ENCODE measurements at regions of chr12 and their contacts with region 1.

Region 1: DNA sequence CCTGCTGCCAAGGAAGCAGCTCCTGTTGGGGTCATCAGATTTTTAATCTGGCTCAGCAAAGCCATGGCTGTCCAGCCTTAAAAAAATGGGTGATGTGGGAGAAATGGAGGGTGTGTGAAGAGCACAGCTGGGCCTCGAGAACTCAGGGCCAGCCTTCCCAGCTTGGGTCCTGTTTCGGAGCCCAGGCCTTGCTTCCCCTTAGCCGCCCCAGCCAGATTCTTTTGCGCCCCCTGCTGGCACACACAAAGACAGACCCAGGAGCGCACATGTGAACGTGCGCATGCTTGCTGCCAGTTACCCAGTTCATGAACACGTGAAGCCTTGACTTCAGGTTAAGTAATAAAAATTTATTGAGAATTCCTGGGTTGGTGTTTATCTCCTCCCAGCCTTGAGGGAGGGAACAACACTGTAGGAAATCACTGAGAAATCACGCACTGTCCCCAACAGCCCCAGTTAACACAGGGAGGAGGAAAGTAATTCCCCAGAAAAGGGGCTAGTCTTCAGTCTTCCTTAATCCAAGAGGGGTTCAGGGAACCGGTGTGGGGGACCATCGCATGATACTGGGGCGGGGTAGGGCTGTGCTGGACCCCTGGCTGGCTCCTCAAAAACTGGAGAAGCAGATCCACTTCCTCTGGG is 5.3 kb downstream of the PHB2 start:
- DNase-seq: peak; percentile 95
- ATAC-seq: peak; percentile 48
- H3K4me3 Mint-ChIP-seq: no peak overlapping the region
- H3K27ac Mint-ChIP-seq: peak overlapping the region; percentile 94
- H3K4me1 Mint-ChIP-seq: peaks cover 76% of the 10 kb centered on the region
- H3K27me3 Mint-ChIP-seq: no peaks in the 10 kb centered on the region

Region 2: DNA sequence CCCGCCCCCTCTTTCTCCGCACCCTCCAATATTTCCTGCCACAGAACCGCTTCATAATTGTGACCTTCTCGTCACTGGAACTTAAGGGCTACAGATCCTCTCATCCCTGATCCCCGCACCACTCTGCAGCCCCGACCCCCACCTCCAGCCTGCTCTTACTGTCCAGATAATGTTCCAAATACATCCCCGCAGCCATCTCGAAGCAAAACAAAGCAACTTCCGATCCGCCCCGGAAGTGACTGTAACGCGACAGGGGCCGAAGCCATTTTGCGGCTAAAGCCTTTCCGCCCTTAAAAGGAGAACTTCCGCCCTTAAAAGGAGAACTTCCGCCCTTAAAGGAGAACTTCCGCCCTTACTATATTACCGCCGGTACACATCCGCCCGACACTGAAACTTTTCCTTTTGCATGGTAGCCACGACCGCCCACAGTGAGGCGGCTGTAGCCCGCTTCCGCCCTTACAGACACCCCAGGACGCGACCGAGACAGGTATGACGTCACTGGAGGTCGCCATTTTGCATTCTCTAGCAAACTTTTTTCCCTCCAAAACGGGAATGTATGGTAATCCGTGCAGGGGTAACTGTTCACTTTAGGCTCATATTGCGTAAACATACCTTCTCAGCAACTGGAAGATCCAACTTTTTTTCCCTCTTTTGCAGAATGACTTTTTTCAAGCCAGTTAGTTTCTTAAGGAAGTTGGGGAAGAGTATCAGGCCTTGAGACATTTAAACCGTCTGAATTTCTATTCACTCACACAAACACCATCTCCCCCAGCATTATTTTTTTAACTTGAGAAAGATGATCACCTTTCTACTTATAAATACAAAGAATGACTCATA is 302.0 kb before region 1 on chr12 and contains the start of gene ING4:
- CTCF ChIA-PET with region 1: interaction called, 3 read pairs
- POLR2A ChIA-PET with region 1: no interaction called
- intact Hi-C with region 1: loop called in 1 of 2 experiments (anchors 1 kb)
- DNase-seq: peak; percentile 98
- ATAC-seq: peak; percentile 98
- H3K4me3 Mint-ChIP-seq: peak within 1 kb of the TSS; percentile 84
- H3K27ac Mint-ChIP-seq: peak within 1 kb of the TSS; percentile 91
- H3K4me1 Mint-ChIP-seq: peaks cover 24% of the 10 kb centered on the region
- H3K27me3 Mint-ChIP-seq: no peaks in the 10 kb centered on the region
- total RNA-seq, gene ING4: 14.9 to 17.6 TPM

Region 3: GRCh38 chr12:6851921-6852650 is 113.1 kb before region 1 on chr12 and contains the start of gene USP5:
- CTCF ChIA-PET with region 1: interaction called, 3 read pairs
- POLR2A ChIA-PET with region 1: no interaction called
- intact Hi-C with region 1: loop called (anchors 1 kb)
- DNase-seq: peak; percentile 99
- ATAC-seq: peak; percentile 80
- H3K4me3 Mint-ChIP-seq: peak within 1 kb of the TSS; percentile 93
- H3K27ac Mint-ChIP-seq: peak within 1 kb of the TSS; percentile 99
- H3K4me1 Mint-ChIP-seq: peaks cover 21% of the 10 kb centered on the region
- H3K27me3 Mint-ChIP-seq: no peaks in the 10 kb centered on the region
- total RNA-seq, gene USP5: 128 to 132 TPM

Region 4: DNA sequence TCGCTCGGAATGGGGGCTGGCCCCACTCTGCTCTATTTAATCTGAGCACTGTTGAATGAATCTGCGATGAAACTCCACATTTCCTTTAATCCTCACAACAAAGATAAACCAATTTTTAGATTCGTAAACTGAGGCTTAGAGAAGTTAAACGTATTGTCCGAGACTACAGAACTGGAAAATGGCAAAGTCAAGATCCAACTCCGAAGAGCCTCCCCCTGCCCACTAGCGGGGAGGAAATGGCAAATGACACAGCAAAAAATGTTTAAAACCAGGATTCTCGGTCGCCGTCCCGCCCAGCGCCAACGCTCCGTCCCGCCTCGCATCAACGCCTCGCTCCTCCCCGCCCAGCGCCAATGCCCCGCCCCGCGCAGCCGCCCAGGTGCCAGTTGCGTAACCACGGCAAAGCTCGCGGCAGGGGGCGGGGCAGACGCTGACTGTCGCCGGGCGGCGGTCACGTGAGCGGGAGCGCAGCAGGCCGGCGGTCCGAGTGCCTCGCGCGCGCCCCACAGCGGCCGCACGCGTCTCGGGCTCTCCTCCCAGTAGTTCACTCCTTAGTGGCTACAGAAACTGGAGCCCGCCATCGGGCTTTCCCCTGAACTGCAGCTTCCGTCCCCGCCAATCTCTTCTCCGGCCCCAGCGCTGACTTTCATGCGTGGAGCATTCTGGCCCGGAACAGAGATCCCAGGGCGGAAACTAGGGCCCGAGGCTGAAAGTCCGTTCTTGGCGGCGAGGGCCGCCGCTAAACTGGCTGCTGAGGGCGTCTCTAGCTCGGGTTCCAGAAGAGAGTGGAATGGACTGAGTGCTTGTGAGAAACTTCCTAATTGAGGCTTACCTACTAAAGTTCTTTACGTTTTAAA is 74.1 kb before region 1 on chr12:
- CTCF ChIA-PET with region 1: interaction called, 6 read pairs
- POLR2A ChIA-PET with region 1: no interaction called
- intact Hi-C with region 1: loop called in 1 of 2 experiments (anchors 1 kb)
- DNase-seq: peak; percentile 100
- ATAC-seq: peak; percentile 94
- H3K4me3 Mint-ChIP-seq: peak overlapping the region; percentile 87
- H3K27ac Mint-ChIP-seq: peak overlapping the region; percentile 94
- H3K4me1 Mint-ChIP-seq: peaks cover 12% of the 10 kb centered on the region
- H3K27me3 Mint-ChIP-seq: no peaks in the 10 kb centered on the region

Region 5: DNA sequence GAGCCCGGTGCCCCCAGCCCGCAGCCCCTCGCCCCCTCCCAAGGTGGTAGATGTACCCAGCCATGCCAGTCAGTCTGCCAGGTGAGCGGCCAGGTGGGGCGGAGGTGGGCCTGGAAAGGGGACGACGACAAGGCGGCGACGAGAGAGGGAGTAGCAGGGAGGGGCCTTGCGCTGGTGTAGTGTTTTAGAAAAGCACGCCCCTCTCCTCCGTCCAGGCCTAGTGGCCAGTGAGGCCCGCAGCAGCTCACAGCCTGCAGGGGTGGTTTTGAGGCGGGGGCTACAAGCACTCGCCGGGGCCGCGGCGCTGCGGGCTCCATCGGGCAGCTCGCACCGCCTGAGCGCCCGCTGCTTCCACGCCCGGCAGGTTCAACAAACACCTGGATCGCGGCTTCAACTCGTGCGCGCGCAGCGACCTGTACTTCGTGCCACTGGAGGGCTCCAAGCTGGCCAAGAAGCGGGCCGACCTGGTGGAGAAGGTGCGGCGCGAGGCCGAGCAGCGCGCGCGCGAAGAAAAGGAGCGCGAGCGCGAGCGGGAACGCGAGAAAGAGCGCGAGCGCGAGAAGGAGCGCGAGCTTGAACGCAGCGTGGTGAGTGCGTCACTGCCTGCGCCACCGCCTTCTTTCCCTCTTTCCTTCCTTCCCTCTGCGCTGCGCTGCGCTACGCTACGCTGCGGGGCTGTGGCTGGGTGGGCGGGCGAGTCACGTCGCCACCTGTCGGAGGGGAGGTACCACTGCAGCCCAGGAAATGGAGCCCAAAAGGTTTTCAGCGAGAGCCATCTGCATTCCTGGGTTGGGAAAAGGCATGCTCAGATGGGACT is 27.5 kb before region 1 on chr12:
- CTCF ChIA-PET with region 1: interaction called, 237 read pairs
- POLR2A ChIA-PET with region 1: interaction called, 3 read pairs
- intact Hi-C with region 1: loop called in 1 of 2 experiments (anchors 1 kb)
- DNase-seq: peak; percentile 97
- ATAC-seq: peak; percentile 93
- H3K4me3 Mint-ChIP-seq: peak overlapping the region; percentile 83
- H3K27ac Mint-ChIP-seq: peak overlapping the region; percentile 96
- H3K4me1 Mint-ChIP-seq: peaks cover 52% of the 10 kb centered on the region
- H3K27me3 Mint-ChIP-seq: no peaks in the 10 kb centered on the region

Region 6: GRCh38 chr12:7018350-7019042 is 53.4 kb after region 1 on chr12 and contains the start of gene LPCAT3:
- CTCF ChIA-PET with region 1: interaction called, 4 read pairs
- POLR2A ChIA-PET with region 1: no interaction called
- intact Hi-C with region 1: loop called (anchors 1 kb)
- DNase-seq: peak; percentile 98
- ATAC-seq: peak; percentile 98
- H3K4me3 Mint-ChIP-seq: peak within 1 kb of the TSS; percentile 83
- H3K27ac Mint-ChIP-seq: peak within 1 kb of the TSS; percentile 80
- H3K4me1 Mint-ChIP-seq: peaks cover 29% of the 10 kb centered on the region
- H3K27me3 Mint-ChIP-seq: no peaks in the 10 kb centered on the region
- total RNA-seq, gene LPCAT3: 20.8 to 28.0 TPM

Region 7: DNA sequence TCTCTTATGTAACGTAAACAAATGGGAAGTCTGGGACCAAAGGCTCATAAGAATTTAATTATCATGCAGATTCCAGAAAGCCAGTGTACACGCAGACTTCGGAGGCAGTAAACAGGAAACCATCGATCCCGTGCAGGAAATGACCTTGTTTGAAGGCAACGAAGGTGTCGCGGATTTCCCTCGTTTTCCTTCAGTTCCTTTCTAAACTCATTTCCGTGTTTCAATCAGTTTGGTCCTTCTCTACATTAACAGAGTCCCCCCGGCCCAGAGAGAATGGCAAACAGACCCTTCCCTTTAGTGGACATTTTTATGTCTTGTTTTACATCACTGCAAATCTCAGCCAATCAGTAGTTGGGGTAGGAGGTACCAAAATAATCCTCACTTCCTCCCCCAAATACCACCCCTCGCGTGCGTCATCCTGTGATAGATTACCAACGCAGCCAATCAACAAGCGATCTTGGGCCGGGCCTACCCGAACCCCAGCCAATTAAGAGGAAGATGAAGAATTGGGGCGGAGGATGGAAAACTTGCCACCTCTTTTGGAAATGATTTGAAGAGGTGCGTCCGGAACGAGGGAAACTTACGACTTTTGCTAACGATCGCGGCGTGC is 1061.3 kb after region 1 on chr12:
- CTCF ChIA-PET with region 1: no interaction called
- POLR2A ChIA-PET with region 1: interaction called, 5 read pairs
- intact Hi-C with region 1: loop called in 1 of 2 experiments (anchors 2 kb)
- DNase-seq: peak; percentile 98
- ATAC-seq: peak; percentile 97
- H3K4me3 Mint-ChIP-seq: peak overlapping the region; percentile 92
- H3K27ac Mint-ChIP-seq: peak overlapping the region; percentile 97
- H3K4me1 Mint-ChIP-seq: peaks cover 11% of the 10 kb centered on the region
- H3K27me3 Mint-ChIP-seq: no peaks in the 10 kb centered on the region